ENCODE measurements at regions of chr7 and their contacts with region 1.

Region 1: GRCh38 chr7:5363729-5364128 is 59.9 kb downstream of the TNRC18 start:
- DNase-seq: peak; percentile 33
- ATAC-seq: no peak
- H3K4me3 Mint-ChIP-seq: no peak overlapping the region
- H3K27ac Mint-ChIP-seq: peak overlapping the region; percentile 15
- H3K4me1 Mint-ChIP-seq: peaks cover 14% of the 10 kb centered on the region
- H3K27me3 Mint-ChIP-seq: no peaks in the 10 kb centered on the region
- CTCF ChIP-seq: no peak

Region 2: GRCh38 chr7:5382281-5382892 is 18.7 kb after region 1 on chr7:
- CTCF ChIA-PET with region 1: interaction called, 10 read pairs
- POLR2A ChIA-PET with region 1: no interaction called
- intact Hi-C with region 1: no loop called
- DNase-seq: no peak
- ATAC-seq: peak; percentile 24
- H3K4me3 Mint-ChIP-seq: no peak overlapping the region
- H3K27ac Mint-ChIP-seq: no peak overlapping the region
- H3K4me1 Mint-ChIP-seq: peaks cover 26% of the 10 kb centered on the region
- H3K27me3 Mint-ChIP-seq: no peaks in the 10 kb centered on the region
- CTCF ChIP-seq: no peak

Region 3: DNA sequence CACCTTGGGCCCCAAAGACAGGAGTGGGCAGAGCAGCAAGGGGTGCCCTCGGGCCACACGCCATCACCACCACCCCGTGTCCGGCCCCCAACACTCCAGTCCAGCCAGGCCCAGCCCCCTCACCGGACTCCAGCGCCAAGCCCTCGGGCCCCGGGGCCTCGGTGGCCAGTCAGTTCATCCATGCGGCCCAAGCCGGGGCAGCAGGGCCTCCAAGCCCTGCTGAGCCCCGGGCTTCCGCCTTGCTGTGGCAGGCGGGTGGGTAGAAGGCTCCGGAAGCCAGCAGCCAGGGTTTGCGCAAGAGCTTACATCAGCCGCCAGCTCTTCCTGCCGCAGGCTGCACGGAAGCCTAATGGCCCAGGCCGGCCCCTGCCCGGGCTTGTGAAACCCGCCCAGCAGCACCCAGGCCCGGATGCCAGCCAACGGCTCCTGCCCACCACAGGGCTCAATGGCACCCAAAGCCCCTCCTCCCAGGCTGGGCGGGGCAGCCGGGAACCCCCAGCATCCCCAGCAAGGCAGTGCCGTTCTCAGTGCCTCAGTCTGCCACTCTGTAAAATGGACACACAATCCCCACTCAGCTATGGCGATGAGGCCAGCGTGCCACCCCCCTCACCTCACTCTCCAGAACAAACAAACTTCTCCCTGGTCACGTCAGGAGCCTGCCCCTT is 33.4 kb after region 1 on chr7:
- CTCF ChIA-PET with region 1: interaction called, 11 read pairs
- POLR2A ChIA-PET with region 1: interaction called, 3 read pairs
- intact Hi-C with region 1: no loop called
- DNase-seq: peak; percentile 95
- ATAC-seq: peak; percentile 91
- H3K4me3 Mint-ChIP-seq: peak overlapping the region; percentile 82
- H3K27ac Mint-ChIP-seq: peak overlapping the region; percentile 92
- H3K4me1 Mint-ChIP-seq: peaks cover 32% of the 10 kb centered on the region
- H3K27me3 Mint-ChIP-seq: no peaks in the 10 kb centered on the region
- CTCF ChIP-seq: no peak

Region 4: DNA sequence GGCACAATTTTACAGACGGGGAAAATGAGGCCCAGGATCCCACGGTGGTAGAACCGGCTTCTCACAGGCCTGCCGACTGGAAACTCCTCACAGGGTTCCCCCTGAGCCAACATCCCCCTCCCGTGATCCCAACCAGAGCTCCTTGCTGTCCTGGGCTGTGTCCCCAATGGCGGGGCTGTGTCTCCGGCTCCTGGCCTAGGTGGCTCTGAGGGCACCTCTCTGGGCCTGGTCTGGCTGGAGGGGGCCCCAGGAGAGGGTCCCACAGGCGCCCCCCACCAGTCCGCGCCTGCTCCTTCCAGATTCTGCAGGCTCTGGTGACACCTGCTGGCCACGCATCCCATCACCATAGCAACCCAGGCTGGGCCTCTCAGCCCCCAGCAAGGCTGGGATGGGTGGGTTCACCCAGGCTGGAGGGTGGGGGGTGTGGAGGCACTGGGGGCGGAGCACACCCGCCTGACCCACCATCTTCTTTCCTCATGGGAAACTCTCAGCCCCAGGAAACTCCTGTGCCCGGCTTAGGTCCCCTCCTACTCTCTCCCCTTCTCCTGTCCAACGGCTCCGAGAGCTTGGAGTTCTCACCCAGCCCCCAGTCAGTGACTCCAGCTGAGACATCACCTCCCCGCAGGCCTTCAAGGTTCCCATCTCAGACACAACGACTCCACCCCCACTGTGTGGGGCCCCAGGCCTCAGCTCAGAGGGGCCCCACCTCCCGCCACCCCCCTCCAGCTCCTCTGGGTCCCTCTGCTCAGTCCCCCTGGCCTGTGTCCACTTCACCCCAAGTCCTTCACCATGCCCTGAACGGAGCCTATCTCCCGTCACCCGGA is 87.0 kb after region 1 on chr7:
- CTCF ChIA-PET with region 1: interaction called, 21 read pairs
- POLR2A ChIA-PET with region 1: no interaction called
- intact Hi-C with region 1: no loop called
- DNase-seq: peak; percentile 63
- ATAC-seq: peak; percentile 83
- H3K4me3 Mint-ChIP-seq: no peak overlapping the region
- H3K27ac Mint-ChIP-seq: no peak overlapping the region
- H3K4me1 Mint-ChIP-seq: peaks cover 6% of the 10 kb centered on the region
- H3K27me3 Mint-ChIP-seq: no peaks in the 10 kb centered on the region
- CTCF ChIP-seq: peak; percentile 67